Endothelial cell of umbilical vein (primary cell): ENCODE measurements at regions of chr17 and their contacts with region 1.

Region 1: GRCh38 chr17:39730095-39730921 is at the start of gene MIEN1:
- DNase-seq: peak; percentile 86
- H3K4me3 ChIP-seq: peak within 1 kb of the TSS; percentile 40 to 87 (median 59)
- H3K27ac ChIP-seq: peak within 1 kb of the TSS; percentile 68
- H3K4me1 ChIP-seq: peaks cover 13% of the 10 kb centered on the region
- H3K27me3 ChIP-seq: no peaks in the 10 kb centered on the region
- CTCF ChIP-seq: peak; percentile 83 to 95
- POLR2A ChIP-seq: peak; percentile 82
- total RNA-seq, gene MIEN1: 42.4 and 51.1 TPM in 2 replicates

Region 2: DNA sequence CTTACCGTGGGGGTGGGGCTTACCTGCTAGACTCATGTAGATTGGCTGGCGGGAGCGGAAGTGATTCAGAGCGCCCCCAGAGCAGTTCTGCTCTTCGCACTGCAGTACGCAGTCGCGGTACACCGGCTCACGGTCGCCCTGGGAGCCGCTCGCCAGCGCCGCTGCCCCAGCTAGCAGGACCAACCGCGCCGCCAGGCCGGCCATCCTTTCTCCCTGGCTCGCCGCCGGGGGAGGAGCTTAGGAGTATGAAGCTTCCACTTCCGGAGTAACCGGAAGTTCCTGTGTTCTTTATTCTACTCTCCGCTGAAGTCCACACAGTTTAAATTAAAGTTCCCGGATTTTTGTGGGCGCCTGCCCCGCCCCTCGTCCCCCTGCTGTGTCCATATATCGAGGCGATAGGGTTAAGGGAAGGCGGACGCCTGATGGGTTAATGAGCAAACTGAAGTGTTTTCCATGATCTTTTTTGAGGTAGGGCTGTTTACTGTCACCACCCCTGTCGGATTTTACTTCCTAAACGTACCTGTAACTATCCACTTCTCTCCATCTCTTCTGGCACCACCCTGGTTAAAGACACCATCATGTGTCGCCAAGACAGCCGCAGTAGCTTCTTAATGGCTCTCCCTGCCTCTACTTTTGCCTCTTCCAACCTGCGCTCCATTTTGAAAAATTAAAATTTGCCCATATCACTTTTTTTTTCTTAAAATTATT is 42.3 kb before region 1 on chr17 and contains the start of gene PGAP3:
- CTCF ChIA-PET with region 1: interaction called, 12 read pairs
- POLR2A ChIA-PET with region 1: no interaction called
- dilution Hi-C with region 1: no loop called
- intact Hi-C with region 1: no loop called
- DNase-seq: peak; percentile 94
- H3K4me3 ChIP-seq: peak within 1 kb of the TSS; percentile 69 to 91 (median 74)
- H3K27ac ChIP-seq: peak within 1 kb of the TSS; percentile 56
- H3K4me1 ChIP-seq: peaks cover 9% of the 10 kb centered on the region
- H3K27me3 ChIP-seq: no peaks in the 10 kb centered on the region
- CTCF ChIP-seq: no peak
- POLR2A ChIP-seq: peak; percentile 85
- total RNA-seq, gene PGAP3: 6.4 and 7.0 TPM in 2 replicates

Region 3: DNA sequence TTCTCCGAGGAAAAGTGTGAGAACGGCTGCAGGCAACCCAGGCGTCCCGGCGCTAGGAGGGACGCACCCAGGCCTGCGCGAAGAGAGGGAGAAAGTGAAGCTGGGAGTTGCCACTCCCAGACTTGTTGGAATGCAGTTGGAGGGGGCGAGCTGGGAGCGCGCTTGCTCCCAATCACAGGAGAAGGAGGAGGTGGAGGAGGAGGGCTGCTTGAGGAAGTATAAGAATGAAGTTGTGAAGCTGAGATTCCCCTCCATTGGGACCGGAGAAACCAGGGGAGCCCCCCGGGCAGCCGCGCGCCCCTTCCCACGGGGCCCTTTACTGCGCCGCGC is 30.5 kb before region 1 on chr17 and contains the start of gene ERBB2:
- CTCF ChIA-PET with region 1: interaction called, 15 read pairs
- POLR2A ChIA-PET with region 1: no interaction called
- dilution Hi-C with region 1: no loop called
- intact Hi-C with region 1: no loop called
- DNase-seq: peak; percentile 57
- H3K4me3 ChIP-seq: peak within 1 kb of the TSS; percentile 44 to 58 (median 52)
- H3K27ac ChIP-seq: no peak within 1 kb of the TSS
- H3K4me1 ChIP-seq: no peaks in the 10 kb centered on the region
- H3K27me3 ChIP-seq: peaks cover 0 to 2% of the 10 kb centered on the region in 2 experiments
- CTCF ChIP-seq: no peak
- POLR2A ChIP-seq: peak; percentile 64
- total RNA-seq, gene ERBB2: 29.1 and 32.9 TPM in 2 replicates

Region 4: DNA sequence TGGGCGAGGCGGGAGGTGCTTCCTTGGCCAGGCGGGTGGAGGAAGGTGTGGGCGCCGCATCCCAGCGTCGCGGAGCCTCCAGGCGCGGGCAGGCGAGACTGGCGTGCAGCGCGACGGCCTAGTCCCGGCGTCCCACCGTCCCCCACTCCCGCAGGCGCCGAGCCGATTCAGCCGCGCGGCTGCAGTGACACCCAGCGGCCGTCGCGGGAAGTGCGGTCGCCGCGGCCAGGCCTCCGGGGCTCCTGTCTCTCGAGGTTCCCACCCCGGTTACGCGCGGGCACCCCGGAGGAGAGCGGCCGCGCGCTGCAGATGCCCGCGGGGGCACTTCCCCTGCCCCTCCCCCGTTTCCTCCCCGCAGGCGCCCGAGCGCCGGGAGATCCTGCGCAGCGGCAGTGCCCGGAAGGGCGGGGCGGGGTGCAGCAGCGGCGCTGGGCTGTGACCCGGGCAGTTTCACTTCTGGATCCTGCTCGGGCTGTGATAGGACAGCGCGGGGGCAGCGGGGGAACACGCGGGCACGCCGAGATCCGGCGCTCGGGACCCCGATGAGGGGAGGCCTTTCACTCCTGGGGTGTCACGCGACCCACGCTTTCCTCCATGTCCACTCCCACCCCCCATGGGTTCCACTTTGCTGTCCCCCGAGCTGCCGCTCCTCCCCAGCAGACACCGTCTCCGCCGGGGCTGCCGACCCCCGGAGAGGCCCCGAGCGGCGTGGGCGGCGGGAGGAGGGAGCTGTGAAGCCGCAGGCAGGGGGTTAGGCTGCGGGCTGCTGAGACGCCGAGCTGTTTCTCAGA is 24.0 kb after region 1 on chr17:
- CTCF ChIA-PET with region 1: interaction called, 17 read pairs
- POLR2A ChIA-PET with region 1: no interaction called
- dilution Hi-C with region 1: no loop called
- intact Hi-C with region 1: no loop called
- DNase-seq: peak; percentile 69
- H3K4me3 ChIP-seq: peak overlapping the region; percentile 54 to 71 (median 60)
- H3K27ac ChIP-seq: no peak overlapping the region
- H3K4me1 ChIP-seq: peaks cover 9% of the 10 kb centered on the region
- H3K27me3 ChIP-seq: peaks cover 8 to 15% of the 10 kb centered on the region in 2 experiments
- CTCF ChIP-seq: peak; percentile 77 to 85
- POLR2A ChIP-seq: peak; percentile 62

Region 5: GRCh38 chr17:39903158-39903884 is 173.0 kb after region 1 on chr17:
- CTCF ChIA-PET with region 1: no interaction called
- POLR2A ChIA-PET with region 1: no interaction called
- dilution Hi-C with region 1: no loop called
- intact Hi-C with region 1: no loop called
- DNase-seq: no peak
- H3K4me3 ChIP-seq: no peak overlapping the region
- H3K27ac ChIP-seq: no peak overlapping the region
- H3K4me1 ChIP-seq: no peaks in the 10 kb centered on the region
- H3K27me3 ChIP-seq: no peaks in the 10 kb centered on the region
- CTCF ChIP-seq: no peak
- POLR2A ChIP-seq: no peak